PC-9 (cell line): ENCODE measurements at regions of chr6 and their contacts with region 1.

Region 1: DNA sequence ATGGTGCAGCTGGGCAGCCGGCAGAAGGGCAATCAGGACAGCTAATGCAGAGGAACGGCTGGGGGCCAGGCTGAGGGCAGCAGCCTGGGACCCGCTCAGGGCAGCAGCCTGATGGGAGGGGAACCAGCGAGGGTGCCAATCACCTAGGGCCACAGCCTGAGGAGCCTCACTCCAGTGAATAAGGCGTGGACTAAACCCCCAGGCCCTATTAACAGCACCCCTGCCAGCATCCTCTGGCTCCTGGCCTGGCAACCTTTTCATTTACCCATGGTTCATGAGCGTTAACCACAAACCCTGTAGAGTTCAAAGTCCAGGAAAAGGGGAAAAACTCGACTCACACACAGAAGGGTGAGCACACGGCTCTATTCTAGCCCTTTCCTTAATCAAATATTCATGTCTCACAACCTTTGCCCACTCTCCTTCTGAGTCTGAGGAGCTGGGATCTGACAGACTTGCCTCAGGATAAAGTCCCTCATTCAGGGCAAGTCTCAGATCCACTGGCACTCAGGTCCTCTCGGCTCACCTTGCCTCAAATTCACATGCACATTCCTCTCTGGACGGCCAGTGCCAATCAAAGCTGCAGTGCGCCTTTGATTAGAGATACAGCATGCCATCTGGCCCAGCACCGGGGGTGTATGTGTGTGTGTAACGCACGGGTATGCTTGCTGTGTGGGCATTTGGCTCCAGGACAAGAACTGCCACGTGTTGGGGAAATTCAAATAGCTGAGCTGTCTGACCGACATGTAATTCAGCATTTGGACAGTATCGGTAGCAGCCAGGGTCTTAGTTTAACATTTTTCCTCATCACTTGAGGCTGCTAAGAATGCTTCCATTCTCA is 86.9 kb upstream of the TRAF3IP2 start:
- DNase-seq: no peak
- H3K4me3 ChIP-seq: no peak overlapping the region
- H3K27ac ChIP-seq: no peak overlapping the region
- H3K4me1 ChIP-seq: no peaks in the 10 kb centered on the region
- H3K27me3 ChIP-seq: no peaks in the 10 kb centered on the region
- CTCF ChIP-seq: no peak

Region 2: GRCh38 chr6:111027219-111027618 is 665.3 kb before region 1 on chr6:
- CTCF ChIA-PET with region 1: no interaction called
- POLR2A ChIA-PET with region 1: no interaction called
- intact Hi-C with region 1: loop called (anchors 10 kb)
- DNase-seq: no peak
- H3K4me3 ChIP-seq: no peak overlapping the region
- H3K27ac ChIP-seq: no peak overlapping the region
- H3K4me1 ChIP-seq: no peaks in the 10 kb centered on the region
- H3K27me3 ChIP-seq: no peaks in the 10 kb centered on the region
- CTCF ChIP-seq: peak; percentile 34; the same call in 1 of the 2 replicates

Region 3: DNA sequence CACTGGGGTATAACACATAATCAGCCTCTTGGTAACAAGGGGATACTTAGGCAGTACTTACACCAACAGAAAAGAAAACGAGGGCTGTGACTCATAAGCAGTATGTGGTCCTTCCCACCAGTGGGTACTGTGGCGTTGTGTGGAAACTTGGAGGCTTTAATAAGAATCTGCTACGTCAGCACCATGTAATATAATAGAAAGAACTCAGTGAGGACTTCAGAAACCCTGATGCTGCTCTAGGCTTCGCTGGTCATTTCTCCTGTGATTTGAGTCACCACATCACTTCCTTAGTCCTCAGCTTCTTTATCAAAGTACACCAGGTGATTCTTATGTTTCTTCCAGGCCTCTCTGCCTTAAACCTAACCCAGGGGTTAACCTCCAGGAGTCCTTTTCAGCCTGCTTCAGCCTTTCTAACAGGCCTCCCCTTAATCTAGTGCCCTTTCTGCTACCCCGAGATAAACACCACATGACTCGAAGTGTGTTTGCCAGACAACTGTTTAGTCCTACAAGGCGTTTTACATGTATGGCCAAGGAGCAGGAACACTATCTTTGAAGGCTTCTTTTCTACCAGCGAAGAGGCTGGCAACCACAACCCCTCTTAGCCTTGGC is 112.2 kb after region 1 on chr6:
- CTCF ChIA-PET with region 1: no interaction called
- POLR2A ChIA-PET with region 1: no interaction called
- intact Hi-C with region 1: no loop called
- DNase-seq: peak in 1 of 2 experiments; percentile 38
- H3K4me3 ChIP-seq: no peak overlapping the region
- H3K27ac ChIP-seq: peak overlapping the region; percentile 79
- H3K4me1 ChIP-seq: peaks cover 69% of the 10 kb centered on the region
- H3K27me3 ChIP-seq: no peaks in the 10 kb centered on the region
- CTCF ChIP-seq: no peak